Sciatic nerve (tissue), 2 donors: ENCODE measurements at regions of chr12 and their contacts with region 1.

Region 1: DNA sequence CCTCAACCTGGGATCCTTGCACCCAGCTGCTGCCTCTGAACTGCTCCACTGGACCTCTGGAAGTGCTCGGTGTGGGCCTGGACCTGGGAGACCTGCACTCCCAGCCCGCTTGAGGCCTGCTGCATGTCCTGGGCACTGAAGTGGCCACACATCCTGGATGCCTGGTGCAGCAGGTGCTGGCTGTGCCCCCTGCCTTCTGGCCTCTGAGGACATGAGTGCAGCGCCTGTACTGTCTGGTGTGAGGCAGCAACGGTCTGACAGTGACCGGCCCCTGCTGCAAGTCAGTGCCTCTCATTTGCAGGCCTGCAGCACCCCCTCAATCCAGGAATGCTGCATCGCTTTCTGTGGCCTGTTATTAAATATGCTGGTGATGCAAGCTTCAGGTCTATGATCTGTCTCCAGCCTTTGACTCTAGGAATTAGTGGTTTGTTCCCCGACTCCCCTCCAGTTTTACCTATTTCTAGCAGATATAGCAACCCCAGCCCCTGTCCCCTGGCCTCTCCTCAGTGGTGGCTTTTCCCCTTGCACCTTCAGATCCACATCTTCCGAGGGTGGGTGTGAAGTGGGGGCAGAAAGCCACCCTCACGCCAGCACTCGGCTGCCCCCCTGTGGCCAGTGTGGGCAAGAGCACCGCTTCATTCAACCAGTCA is 3.6 kb downstream of the SMIM41 start:
- DNase-seq: peak; percentile 84
- ATAC-seq: peak; percentile 64

Region 2: GRCh38 chr12:51832354-51833107 is 250.6 kb before region 1 on chr12:
- intact Hi-C with region 1: loop called (anchors 10 kb)
- DNase-seq: no peak
- ATAC-seq: no peak

Region 3: GRCh38 chr12:52027046-52027445 is 56.1 kb before region 1 on chr12:
- intact Hi-C with region 1: loop called (anchors 2 kb)
- DNase-seq: no peak
- ATAC-seq: no peak